ENCODE measurements at regions of chr16 and their contacts with region 1.

Region 1: DNA sequence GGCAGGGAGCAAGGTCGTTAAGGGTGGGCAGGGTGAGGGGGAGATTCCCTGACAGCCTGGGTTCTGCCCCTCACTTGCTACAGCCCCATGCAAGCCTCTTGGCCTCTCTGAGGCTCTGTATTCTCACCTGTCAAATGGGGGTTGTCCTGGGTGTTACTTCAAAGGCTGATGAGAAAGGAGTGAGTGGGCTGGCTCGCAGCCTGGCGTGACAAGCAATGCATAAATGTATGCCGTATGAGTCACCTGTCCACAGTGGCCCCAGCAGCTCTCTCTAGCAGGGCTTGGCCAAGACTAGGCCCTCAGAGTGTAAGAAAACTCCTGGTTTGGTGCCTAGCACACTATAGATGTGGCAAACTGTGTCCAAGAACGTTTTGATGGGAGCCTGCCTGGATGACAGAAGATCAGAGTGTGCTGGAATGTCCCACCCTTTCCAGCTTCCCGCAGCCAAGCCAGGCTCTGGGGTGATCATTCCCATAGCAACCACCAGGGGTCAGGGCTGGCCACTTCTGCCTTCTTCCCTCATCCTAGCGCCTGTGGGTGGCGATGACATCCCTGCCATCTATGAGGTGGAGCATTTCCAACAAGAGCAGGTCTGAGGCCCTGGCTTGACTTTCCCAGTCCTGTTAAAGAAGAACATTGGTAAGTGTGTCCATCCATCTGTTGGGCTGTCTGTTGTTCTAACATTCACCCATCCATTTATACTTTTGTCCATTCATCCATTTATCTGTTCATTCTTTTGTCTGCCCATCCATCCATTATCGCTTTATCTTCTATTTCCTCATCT is 37.2 kb upstream of the ADGRG1 start:
- DNase-seq: peak; percentile 79 to 81
- H3K4me3 ChIP-seq: no peak overlapping the region
- H3K27ac ChIP-seq: peak overlapping the region in 1 of 3 donors; percentile 34
- H3K4me1 ChIP-seq: no peaks in the 10 kb centered on the region
- H3K27me3 ChIP-seq: no peaks in the 10 kb centered on the region
- CTCF ChIP-seq: peak; percentile 76 to 98 (median 90)
- POLR2A ChIP-seq: no peak

Region 2: DNA sequence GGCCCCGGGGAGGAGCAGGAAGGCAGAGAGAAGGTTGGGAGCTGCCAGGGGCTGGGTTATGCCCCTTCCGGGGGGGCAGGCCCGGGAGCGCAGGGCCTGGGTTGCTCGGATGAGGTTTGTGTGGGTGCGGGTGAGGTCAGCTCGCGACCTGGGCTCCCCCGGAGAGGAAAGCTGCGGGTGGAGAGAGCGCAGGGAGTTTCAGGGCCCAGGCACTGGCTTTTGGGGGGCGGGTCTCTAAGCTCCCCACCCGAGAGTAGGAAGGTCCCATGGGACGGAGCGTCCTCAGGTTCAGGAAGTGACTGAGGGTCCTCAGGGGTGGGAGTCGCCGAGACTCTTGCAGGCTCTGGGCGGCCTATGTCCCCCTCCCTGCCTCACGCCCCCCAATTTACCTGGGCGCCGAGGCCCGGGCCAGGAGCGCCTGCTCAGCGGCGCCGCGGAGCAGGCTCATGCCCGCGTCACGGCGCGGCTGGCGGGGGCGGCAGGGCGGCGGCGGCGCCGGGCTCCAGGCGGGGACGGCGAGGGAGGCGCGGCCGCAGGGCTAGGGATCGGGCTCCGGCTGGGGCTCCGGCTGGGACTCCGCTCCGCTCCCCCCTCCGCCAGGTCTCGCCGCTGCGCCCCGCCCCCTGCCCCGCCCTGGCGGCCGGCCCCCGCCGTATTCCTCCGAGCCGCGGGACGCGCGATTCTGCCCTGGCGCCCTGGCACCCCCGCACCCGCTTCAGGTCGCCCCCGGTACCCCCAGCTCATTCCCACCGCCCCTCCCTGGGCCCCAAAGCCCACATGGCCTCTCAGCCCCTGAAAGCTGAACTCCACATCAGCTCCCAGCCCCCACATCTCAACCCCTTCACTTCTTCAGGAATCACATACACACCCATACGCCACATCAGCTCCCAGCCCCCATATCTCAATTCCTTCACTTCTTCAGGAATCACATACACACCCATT is 105.1 kb before region 1 on chr16 and contains the start of gene DOK4:
- intact Hi-C with region 1: no loop called
- DNase-seq: peak; percentile 82 to 83
- H3K4me3 ChIP-seq: peak within 1 kb of the TSS; percentile 22 to 68 (median 61)
- H3K27ac ChIP-seq: peak within 1 kb of the TSS in 2 of 3 donors; percentile 44 to 56
- H3K4me1 ChIP-seq: peaks cover 15 to 22% of the 10 kb centered on the region in 2 donors
- H3K27me3 ChIP-seq: no peaks in the 10 kb centered on the region
- CTCF ChIP-seq: no peak
- POLR2A ChIP-seq: peak in 1 of 2 donors; percentile 56
- total RNA-seq, gene DOK4: 9.1 to 27.3 (median 13.3) TPM

Region 3: GRCh38 chr16:57653936-57654335 is 62.7 kb after region 1 on chr16:
- intact Hi-C with region 1: loop called (anchors 5 kb)
- DNase-seq: peak in 1 of 2 donors; percentile 43
- H3K4me3 ChIP-seq: no peak overlapping the region
- H3K27ac ChIP-seq: peak overlapping the region in 1 of 3 donors; percentile 40
- H3K4me1 ChIP-seq: no peaks in the 10 kb centered on the region
- H3K27me3 ChIP-seq: no peaks in the 10 kb centered on the region
- CTCF ChIP-seq: no peak
- POLR2A ChIP-seq: peak in 1 of 2 donors; percentile 30

Region 4: DNA sequence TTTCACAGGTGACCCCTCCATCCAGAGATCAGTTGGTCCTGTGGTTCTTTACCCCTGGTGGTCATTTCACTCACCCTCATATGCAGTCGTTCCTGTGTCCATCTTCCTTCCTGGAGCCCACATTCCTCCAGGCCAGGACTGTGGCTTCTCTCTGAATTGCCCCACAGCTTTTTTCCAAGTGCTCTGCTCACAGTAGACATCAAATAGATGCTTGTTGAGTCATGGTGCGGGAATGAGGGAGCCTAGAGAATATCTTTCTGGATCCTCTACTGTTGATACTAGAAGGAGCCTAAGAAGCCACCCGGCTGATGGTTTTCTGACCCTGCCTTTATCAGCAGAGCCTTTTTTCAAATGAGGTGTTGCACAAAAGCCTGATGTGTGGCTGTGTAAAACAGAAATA is 420.4 kb after region 1 on chr16:
- intact Hi-C with region 1: loop called (anchors 10 kb)
- DNase-seq: no peak
- H3K4me3 ChIP-seq: no peak overlapping the region
- H3K27ac ChIP-seq: no peak overlapping the region
- H3K4me1 ChIP-seq: no peaks in the 10 kb centered on the region
- H3K27me3 ChIP-seq: no peaks in the 10 kb centered on the region
- CTCF ChIP-seq: no peak
- POLR2A ChIP-seq: no peak